ENCODE measurements at regions of chr9 and their contacts with region 1.

Region 1: DNA sequence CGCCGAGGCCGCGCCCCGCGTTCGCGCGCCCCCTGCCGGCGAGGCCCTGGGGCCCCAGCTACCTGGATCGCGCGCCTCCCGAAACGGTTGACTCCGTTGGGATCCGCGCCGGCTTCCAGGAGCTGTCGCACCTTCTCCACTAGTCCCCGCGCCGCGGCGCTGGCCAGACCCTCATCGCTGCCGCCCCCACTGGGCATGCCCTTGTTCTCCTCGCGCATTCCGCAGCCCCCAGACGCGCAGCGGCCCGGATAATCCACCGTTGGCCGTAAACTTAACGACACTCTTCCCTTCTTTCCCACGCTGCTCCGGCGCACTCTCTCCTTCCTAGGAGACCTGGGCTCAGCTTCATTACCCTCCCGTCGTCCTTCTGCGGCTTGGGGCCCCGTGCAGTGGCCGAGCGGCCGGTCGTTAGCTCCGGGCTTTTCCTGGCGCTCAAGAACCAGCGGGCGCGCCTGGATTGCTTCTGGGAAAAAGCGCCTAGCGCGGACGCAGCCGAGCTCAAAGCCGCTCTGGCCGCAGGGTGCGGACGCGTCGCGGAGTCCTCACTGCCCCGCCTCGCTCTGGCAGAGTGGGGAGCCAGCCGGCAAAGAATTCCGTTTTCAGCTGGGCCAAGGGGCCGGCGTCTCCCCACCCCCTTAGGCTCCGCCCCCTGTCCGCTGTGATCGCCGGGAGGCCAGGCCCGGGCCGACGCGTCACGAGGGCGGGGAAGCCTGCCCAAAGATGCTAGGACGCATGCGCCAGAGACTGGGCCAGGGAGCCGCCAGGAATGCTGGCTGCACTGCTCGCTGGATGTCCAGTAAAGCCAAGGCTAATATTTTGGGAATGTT is at the start of gene CDKN2B:
- DNase-seq: peak; percentile 95
- H3K4me3 ChIP-seq: peak within 1 kb of the TSS; percentile 60 to 95 (median 90)
- H3K27ac ChIP-seq: peak within 1 kb of the TSS; percentile 70
- H3K4me1 ChIP-seq: peaks cover 16% of the 10 kb centered on the region
- H3K27me3 ChIP-seq: peaks cover 20 to 36% of the 10 kb centered on the region in 2 experiments
- CTCF ChIP-seq: peak; percentile 89 to 95
- POLR2A ChIP-seq: peak; percentile 95
- total RNA-seq, gene CDKN2B: 2.1 and 2.3 TPM in 2 replicates

Region 2: GRCh38 chr9:21873540-21874221 is 135.3 kb before region 1 on chr9:
- CTCF ChIA-PET with region 1: no interaction called
- POLR2A ChIA-PET with region 1: no interaction called
- dilution Hi-C with region 1: no loop called
- intact Hi-C with region 1: loop called (anchors 2 kb)
- DNase-seq: peak; percentile 85
- H3K4me3 ChIP-seq: no peak overlapping the region
- H3K27ac ChIP-seq: peak overlapping the region; percentile 82
- H3K4me1 ChIP-seq: peaks cover 45% of the 10 kb centered on the region
- H3K27me3 ChIP-seq: no peaks in the 10 kb centered on the region
- CTCF ChIP-seq: no peak
- POLR2A ChIP-seq: no peak

Region 3: DNA sequence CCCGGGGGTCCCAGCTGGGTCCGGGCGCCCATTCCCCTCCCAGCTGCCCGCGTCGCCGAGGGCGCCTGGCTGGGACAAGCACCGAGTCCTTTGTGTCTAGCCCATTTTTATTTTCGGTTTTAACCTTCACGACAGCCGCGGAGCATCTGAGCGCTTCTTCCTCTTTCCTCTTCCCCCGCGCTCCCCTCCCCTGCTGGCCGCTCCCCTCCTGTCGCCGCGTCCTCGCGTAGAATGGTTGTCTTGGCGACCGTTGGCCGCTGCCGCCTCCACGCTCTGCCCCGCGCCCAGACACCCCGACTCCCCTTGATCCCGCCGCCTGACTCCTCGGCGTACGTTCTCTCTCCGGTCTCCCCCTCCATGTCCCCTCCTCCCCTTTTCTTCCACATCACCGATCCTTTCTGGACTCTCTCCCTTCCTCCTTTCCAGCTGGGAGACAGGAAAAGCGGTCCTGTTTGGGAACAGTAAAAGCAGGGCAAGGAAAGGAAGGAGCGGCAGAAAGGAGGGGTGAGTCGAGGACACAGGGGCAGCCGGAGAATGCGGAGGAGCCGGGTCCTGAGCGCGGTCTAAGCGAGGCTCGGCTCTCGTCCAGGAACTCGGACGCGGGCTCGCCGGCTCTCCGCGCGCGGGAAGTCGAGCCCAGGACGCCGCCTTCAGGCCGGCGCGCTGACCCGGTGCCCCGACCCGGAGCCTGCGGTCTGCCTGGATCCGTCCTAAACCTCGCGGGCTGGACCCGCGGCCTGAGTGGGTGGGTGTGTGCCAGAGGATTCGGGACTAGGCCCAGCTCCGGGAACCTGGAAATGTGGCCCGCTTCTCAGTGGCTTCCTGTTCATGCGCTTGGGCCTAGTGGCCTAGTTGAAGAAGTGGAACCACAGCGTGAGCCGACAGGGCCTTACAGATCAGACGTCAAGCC is 13.5 kb before region 1 on chr9:
- CTCF ChIA-PET with region 1: interaction called, 68 read pairs
- POLR2A ChIA-PET with region 1: interaction called, 8 read pairs
- dilution Hi-C with region 1: no loop called
- intact Hi-C with region 1: loop called (anchors 1 kb)
- DNase-seq: peak; percentile 64
- H3K4me3 ChIP-seq: peak overlapping the region; percentile 64 to 97 (median 94)
- H3K27ac ChIP-seq: peak overlapping the region; percentile 75
- H3K4me1 ChIP-seq: peaks cover 7% of the 10 kb centered on the region
- H3K27me3 ChIP-seq: no peaks in the 10 kb centered on the region
- CTCF ChIP-seq: peak; percentile 23 to 43
- POLR2A ChIP-seq: no peak

Region 4: DNA sequence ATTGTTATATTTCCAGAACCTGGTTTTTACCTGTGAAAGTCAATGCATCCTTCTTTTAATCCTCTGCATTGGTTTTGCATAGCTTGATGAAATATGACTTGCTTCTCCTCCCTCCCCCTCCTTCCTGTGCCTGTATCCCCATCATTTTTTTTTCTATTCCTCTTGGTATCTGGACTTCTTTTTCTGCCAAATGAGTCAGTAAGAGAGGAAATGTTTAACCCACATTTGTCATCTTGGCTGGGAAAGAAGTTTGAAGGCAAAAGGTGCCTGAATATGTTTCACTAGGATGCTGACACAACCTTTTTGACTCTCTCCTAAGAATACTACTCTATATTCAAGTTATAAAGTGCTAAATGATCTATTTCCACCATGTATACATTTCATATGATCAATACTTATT is 35.6 kb after region 1 on chr9:
- CTCF ChIA-PET with region 1: interaction called, 53 read pairs
- POLR2A ChIA-PET with region 1: no interaction called
- dilution Hi-C with region 1: no loop called
- intact Hi-C with region 1: no loop called
- DNase-seq: peak; percentile 87
- H3K4me3 ChIP-seq: no peak overlapping the region
- H3K27ac ChIP-seq: no peak overlapping the region
- H3K4me1 ChIP-seq: peaks cover 24% of the 10 kb centered on the region
- H3K27me3 ChIP-seq: no peaks in the 10 kb centered on the region
- CTCF ChIP-seq: no peak
- POLR2A ChIP-seq: no peak

Region 5: DNA sequence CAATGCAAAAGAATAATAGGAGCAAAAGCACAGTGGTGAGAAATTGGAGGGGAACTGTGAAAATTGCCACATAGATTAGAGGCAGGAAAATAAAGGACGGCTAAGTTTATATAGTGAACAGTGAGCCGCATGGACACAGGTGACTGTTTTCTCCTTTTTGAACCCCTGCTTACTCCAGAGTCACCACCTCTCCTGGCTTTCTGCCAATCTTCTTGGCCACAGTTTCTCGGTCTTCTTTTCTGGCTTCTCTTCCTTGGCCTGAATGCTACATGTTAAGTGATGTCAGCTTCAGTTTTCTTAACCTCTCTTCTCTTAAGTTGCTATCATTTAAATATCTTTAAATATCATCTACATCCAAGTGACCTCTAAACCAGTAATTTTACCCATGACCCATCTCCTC is 47.5 kb after region 1 on chr9:
- CTCF ChIA-PET with region 1: no interaction called
- POLR2A ChIA-PET with region 1: no interaction called
- dilution Hi-C with region 1: no loop called
- intact Hi-C with region 1: no loop called
- DNase-seq: no peak
- H3K4me3 ChIP-seq: no peak overlapping the region
- H3K27ac ChIP-seq: no peak overlapping the region
- H3K4me1 ChIP-seq: peaks cover 21% of the 10 kb centered on the region
- H3K27me3 ChIP-seq: no peaks in the 10 kb centered on the region
- CTCF ChIP-seq: no peak
- POLR2A ChIP-seq: no peak

Region 6: DNA sequence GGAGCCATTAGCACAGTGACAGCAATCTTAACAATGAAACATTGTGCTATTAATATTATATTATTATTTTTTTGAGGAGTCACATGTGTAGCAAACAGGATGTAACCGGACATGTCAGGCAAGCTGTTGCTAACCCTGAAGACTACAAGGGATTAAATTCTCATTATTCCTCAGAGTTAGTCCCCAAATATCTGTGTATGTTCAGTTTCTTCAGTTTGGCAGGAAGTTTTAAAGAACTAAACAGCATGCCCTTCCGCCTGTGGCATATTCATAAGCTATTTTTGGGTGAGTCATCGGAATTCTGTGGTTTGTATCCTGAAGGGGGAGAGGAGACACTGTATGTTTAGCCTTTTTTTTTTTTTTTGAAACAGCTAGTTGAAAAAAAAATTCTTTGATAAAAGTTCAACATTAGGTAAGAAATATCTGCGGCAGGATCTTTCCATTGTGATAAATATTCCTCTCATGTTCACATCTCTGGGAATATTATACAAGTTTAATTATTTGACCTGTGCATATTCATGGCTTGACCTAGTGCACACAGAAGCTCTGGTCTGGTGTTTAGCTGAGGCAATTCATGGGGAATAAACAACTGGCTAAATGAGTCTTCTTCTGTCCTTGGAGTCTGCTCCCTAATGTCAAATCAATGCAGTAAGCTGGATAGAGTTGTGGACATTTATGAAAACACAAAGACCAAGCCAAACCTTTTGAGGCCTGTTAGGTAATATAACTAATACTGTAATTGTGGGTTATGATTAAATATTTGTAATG is 202.8 kb after region 1 on chr9:
- CTCF ChIA-PET with region 1: interaction called, 17 read pairs
- POLR2A ChIA-PET with region 1: no interaction called
- dilution Hi-C with region 1: no loop called
- intact Hi-C with region 1: loop called (anchors 2 kb)
- DNase-seq: peak; percentile 92
- H3K4me3 ChIP-seq: no peak overlapping the region
- H3K27ac ChIP-seq: peak overlapping the region; percentile 21
- H3K4me1 ChIP-seq: peaks cover 30% of the 10 kb centered on the region
- H3K27me3 ChIP-seq: no peaks in the 10 kb centered on the region
- CTCF ChIP-seq: no peak
- POLR2A ChIP-seq: no peak

Region 7: GRCh38 chr9:22452415-22453010 is 443.6 kb after region 1 on chr9:
- CTCF ChIA-PET with region 1: interaction called, 10 read pairs
- POLR2A ChIA-PET with region 1: no interaction called
- dilution Hi-C with region 1: no loop called
- intact Hi-C with region 1: loop called (anchors 5 kb)
- DNase-seq: peak; percentile 63
- H3K4me3 ChIP-seq: no peak overlapping the region
- H3K27ac ChIP-seq: no peak overlapping the region
- H3K4me1 ChIP-seq: peaks cover 13% of the 10 kb centered on the region
- H3K27me3 ChIP-seq: no peaks in the 10 kb centered on the region
- CTCF ChIP-seq: peak; percentile 61 to 68
- POLR2A ChIP-seq: no peak

Region 8: DNA sequence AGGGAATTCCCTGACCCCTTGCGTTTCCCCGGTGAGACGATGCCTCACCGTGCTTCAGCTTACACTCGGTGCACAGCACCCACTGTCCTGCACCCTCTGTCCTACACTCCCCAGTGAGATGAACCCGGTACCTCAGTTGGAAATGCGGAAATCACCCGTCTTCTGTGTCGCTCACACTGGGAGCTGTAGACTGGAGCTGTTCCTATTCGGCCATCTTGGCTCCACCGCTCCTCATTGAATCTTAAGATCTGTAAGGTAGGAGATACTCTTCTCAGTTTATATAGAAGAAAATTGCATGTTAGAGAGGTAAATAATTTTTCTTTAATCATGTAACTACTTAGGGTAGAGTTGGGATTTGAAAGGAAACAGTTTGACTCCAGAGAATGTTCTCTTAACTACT is 499.8 kb after region 1 on chr9:
- CTCF ChIA-PET with region 1: no interaction called
- POLR2A ChIA-PET with region 1: no interaction called
- dilution Hi-C with region 1: no loop called
- intact Hi-C with region 1: no loop called
- DNase-seq: no peak
- H3K4me3 ChIP-seq: no peak overlapping the region
- H3K27ac ChIP-seq: no peak overlapping the region
- H3K4me1 ChIP-seq: no peaks in the 10 kb centered on the region
- H3K27me3 ChIP-seq: no peaks in the 10 kb centered on the region
- CTCF ChIP-seq: no peak
- POLR2A ChIP-seq: no peak